Gastrocnemius medialis (tissue), 4 donors: ENCODE measurements at regions of chr4 and their contacts with region 1.

Region 1: GRCh38 chr4:147866532-147867271 is 134.8 kb downstream of the ARHGAP10 start:
- DNase-seq: peak; percentile 81 to 87
- ATAC-seq: peak; percentile 85 to 91
- H3K4me3 ChIP-seq: no peak overlapping the region
- H3K27ac ChIP-seq: peak overlapping the region; percentile 31 to 70 (median 49)
- H3K4me1 ChIP-seq: peaks cover 24% of the 10 kb centered on the region in 2 donors
- H3K27me3 ChIP-seq: no peaks in the 10 kb centered on the region
- CTCF ChIP-seq: peak; percentile 97 to 100 (median 99)
- POLR2A ChIP-seq: no peak

Region 2: GRCh38 chr4:147518846-147519767 is 347.6 kb before region 1 on chr4:
- in situ Hi-C with region 1: no loop called
- intact Hi-C with region 1: loop called (anchors 10 kb)
- DNase-seq: peak in 1 of 2 donors; percentile 17
- ATAC-seq: peak in 1 of 2 donors; percentile 46
- H3K4me3 ChIP-seq: no peak overlapping the region
- H3K27ac ChIP-seq: no peak overlapping the region
- H3K4me1 ChIP-seq: no peaks in the 10 kb centered on the region
- H3K27me3 ChIP-seq: no peaks in the 10 kb centered on the region
- CTCF ChIP-seq: peak; percentile 24 to 67 (median 44)
- POLR2A ChIP-seq: no peak

Region 3: GRCh38 chr4:147683717-147684700 is 182.7 kb before region 1 on chr4 and contains the start of gene PRMT9:
- in situ Hi-C with region 1: no loop called
- intact Hi-C with region 1: loop called (anchors 1 kb)
- DNase-seq: peak; percentile 75 to 88
- ATAC-seq: peak; percentile 94 to 95
- H3K4me3 ChIP-seq: peak within 1 kb of the TSS; percentile 67 to 93 (median 90)
- H3K27ac ChIP-seq: peak within 1 kb of the TSS; percentile 90 to 97 (median 93)
- H3K4me1 ChIP-seq: peaks cover 19 to 20% of the 10 kb centered on the region in 2 donors
- H3K27me3 ChIP-seq: no peaks in the 10 kb centered on the region
- CTCF ChIP-seq: no peak
- POLR2A ChIP-seq: peak; percentile 84 to 85
- total RNA-seq, gene PRMT9: 5.2 to 9.1 (median 5.5) TPM

Region 4: GRCh38 chr4:147707865-147708672 is 158.6 kb before region 1 on chr4:
- in situ Hi-C with region 1: loop called (anchors 5 kb)
- intact Hi-C with region 1: loop called (anchors 1 kb)
- DNase-seq: peak in 1 of 2 donors; percentile 42
- ATAC-seq: peak; percentile 78 to 88
- H3K4me3 ChIP-seq: peak overlapping the region in 2 of 4 donors; percentile 7 to 45
- H3K27ac ChIP-seq: peak overlapping the region in 1 of 4 donors; percentile 31
- H3K4me1 ChIP-seq: no peaks in the 10 kb centered on the region
- H3K27me3 ChIP-seq: no peaks in the 10 kb centered on the region
- CTCF ChIP-seq: peak; percentile 82 to 94 (median 91)
- POLR2A ChIP-seq: no peak

Region 5: GRCh38 chr4:147714575-147715401 is 151.9 kb before region 1 on chr4:
- in situ Hi-C with region 1: loop called in 3 of 4 experiments (anchors 5 kb)
- intact Hi-C with region 1: no loop called
- DNase-seq: peak; percentile 25 to 50
- ATAC-seq: peak in 1 of 2 donors; percentile 78
- H3K4me3 ChIP-seq: no peak overlapping the region
- H3K27ac ChIP-seq: no peak overlapping the region
- H3K4me1 ChIP-seq: no peaks in the 10 kb centered on the region
- H3K27me3 ChIP-seq: no peaks in the 10 kb centered on the region
- CTCF ChIP-seq: no peak
- POLR2A ChIP-seq: no peak

Region 6: GRCh38 chr4:147731580-147732517 is 134.9 kb before region 1 on chr4 and contains the start of gene ARHGAP10:
- in situ Hi-C with region 1: no loop called
- intact Hi-C with region 1: loop called (anchors 10 kb)
- DNase-seq: peak; percentile 50 to 69
- ATAC-seq: peak; percentile 61 to 69
- H3K4me3 ChIP-seq: peak within 1 kb of the TSS; percentile 70 to 97 (median 90)
- H3K27ac ChIP-seq: peak within 1 kb of the TSS; percentile 84 to 97 (median 96)
- H3K4me1 ChIP-seq: peaks cover 22 to 40% of the 10 kb centered on the region in 2 donors
- H3K27me3 ChIP-seq: no peaks in the 10 kb centered on the region
- CTCF ChIP-seq: peak in 1 of 5 experiments; percentile 13
- POLR2A ChIP-seq: peak; percentile 74 to 77
- total RNA-seq, gene ARHGAP10: 22.1 to 34.6 (median 28.0) TPM

Region 7: DNA sequence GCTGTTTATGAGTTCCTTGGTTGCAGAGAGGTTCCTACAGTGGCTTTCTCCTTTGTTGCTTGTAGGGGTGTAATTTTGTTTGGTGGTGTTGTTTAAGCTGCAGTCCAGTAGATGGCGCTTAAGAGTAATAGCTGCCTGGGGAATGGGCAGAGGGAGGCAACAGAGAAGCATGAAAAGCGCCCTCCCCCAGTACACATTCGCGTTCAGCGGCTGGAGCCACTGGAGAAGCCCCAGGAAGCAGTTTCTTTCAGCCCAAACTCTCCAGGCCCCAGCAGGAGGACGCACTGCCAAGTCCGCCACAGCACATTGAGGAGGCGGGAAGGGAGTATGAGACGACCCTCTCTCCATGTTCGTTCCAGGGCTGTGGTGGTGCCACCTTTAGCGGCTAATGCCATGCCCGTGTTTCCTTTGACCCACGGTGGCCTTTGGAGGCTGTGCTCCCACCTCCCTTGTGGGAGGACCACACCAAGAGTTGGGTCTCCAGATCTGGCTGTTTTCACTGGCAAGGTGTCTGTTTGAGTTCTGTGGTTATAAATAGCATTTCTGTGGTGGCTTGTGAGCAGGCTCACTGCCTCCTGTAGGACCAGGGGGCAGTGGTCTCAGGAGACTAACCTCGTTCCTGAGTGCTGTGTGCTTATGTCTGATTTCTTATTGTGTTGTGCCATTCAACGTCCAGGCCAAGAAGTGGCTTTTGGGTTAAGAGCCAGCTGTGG is 117.5 kb after region 1 on chr4:
- in situ Hi-C with region 1: no loop called
- intact Hi-C with region 1: no loop called
- DNase-seq: peak; percentile 11 to 51
- ATAC-seq: peak; percentile 79 to 88
- H3K4me3 ChIP-seq: no peak overlapping the region
- H3K27ac ChIP-seq: peak overlapping the region; percentile 53 to 75 (median 57)
- H3K4me1 ChIP-seq: peaks cover 31 to 39% of the 10 kb centered on the region in 2 donors
- H3K27me3 ChIP-seq: no peaks in the 10 kb centered on the region
- CTCF ChIP-seq: peak; percentile 59 to 80 (median 71)
- POLR2A ChIP-seq: no peak